Gastrocnemius medialis (tissue), 4 donors: ENCODE measurements at regions of chr11 and their contacts with region 1.

Region 1: GRCh38 chr11:100575870-100576705 is 111.0 kb upstream of the ARHGAP42 start:
- DNase-seq: peak in 1 of 2 donors; percentile 9
- ATAC-seq: peak; percentile 64 to 76
- H3K4me3 ChIP-seq: no peak overlapping the region
- H3K27ac ChIP-seq: no peak overlapping the region
- H3K4me1 ChIP-seq: peaks cover 0 to 14% of the 10 kb centered on the region in 2 donors
- H3K27me3 ChIP-seq: no peaks in the 10 kb centered on the region
- CTCF ChIP-seq: peak; percentile 64 to 82 (median 76)
- POLR2A ChIP-seq: no peak

Region 2: GRCh38 chr11:100681064-100681502 is 105.0 kb after region 1 on chr11:
- in situ Hi-C with region 1: no loop called
- intact Hi-C with region 1: loop called (anchors 2 kb)
- DNase-seq: peak; percentile 29 to 57
- ATAC-seq: peak; percentile 15 to 56
- H3K4me3 ChIP-seq: no peak overlapping the region
- H3K27ac ChIP-seq: peak overlapping the region in 3 of 4 donors; percentile 41 to 45 (median 43)
- H3K4me1 ChIP-seq: peaks cover 4 to 21% of the 10 kb centered on the region in 2 donors
- H3K27me3 ChIP-seq: no peaks in the 10 kb centered on the region
- CTCF ChIP-seq: no peak
- POLR2A ChIP-seq: no peak

Region 3: GRCh38 chr11:100687630-100688395 is 111.7 kb after region 1 on chr11:
- in situ Hi-C with region 1: loop called in 1 of 4 experiments (anchors 10 kb)
- intact Hi-C with region 1: loop called (anchors 2 kb)
- DNase-seq: peak; percentile 38 to 56
- ATAC-seq: peak; percentile 87 to 91
- H3K4me3 ChIP-seq: peak overlapping the region; percentile 52 to 69 (median 68)
- H3K27ac ChIP-seq: peak overlapping the region; percentile 77 to 90 (median 84)
- H3K4me1 ChIP-seq: peaks cover 12 to 27% of the 10 kb centered on the region in 2 donors
- H3K27me3 ChIP-seq: no peaks in the 10 kb centered on the region
- CTCF ChIP-seq: peak in 4 of 5 experiments; percentile 38 to 64 (median 60)
- POLR2A ChIP-seq: peak in 1 of 2 donors; percentile 31

Region 4: DNA sequence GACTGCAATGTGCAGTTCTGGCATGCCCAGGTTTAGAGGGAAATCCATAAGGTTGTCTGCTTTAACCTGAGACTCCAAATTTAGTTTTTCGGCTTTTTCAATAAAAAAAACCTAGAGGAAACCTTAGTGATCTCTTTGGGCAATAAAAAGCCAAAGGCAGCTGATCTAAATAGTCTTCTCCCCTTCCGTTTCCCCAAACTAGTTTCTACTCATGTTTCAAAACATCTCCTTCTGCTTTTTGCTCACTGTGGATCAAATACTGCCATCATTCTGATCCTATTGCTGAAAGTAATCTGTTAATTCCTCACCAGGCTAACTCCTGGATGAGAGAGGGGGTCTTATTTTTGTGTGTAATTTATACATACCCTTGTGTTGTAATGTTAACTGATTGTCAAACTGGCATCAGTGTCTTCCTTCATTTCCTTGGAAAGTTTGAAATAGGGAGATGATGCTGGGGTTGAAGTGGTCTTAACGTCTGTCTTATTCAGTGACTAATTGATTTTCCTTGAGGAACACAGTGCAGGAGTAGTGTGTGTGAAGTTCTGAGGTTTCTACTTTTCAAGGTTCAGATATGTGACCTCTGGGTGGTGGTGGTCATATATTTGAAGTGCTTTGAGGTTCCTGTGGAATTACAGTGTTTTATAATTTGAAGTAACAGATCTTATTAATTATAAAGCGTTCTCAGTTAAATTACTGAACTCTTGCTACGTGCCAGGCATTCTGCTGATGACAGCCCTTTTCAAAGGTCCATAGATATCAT is 166.0 kb after region 1 on chr11:
- in situ Hi-C with region 1: no loop called
- intact Hi-C with region 1: no loop called
- DNase-seq: no peak
- ATAC-seq: no peak
- H3K4me3 ChIP-seq: no peak overlapping the region
- H3K27ac ChIP-seq: no peak overlapping the region
- H3K4me1 ChIP-seq: peaks cover 24 to 36% of the 10 kb centered on the region in 2 donors
- H3K27me3 ChIP-seq: no peaks in the 10 kb centered on the region
- CTCF ChIP-seq: no peak
- POLR2A ChIP-seq: no peak

Region 5: DNA sequence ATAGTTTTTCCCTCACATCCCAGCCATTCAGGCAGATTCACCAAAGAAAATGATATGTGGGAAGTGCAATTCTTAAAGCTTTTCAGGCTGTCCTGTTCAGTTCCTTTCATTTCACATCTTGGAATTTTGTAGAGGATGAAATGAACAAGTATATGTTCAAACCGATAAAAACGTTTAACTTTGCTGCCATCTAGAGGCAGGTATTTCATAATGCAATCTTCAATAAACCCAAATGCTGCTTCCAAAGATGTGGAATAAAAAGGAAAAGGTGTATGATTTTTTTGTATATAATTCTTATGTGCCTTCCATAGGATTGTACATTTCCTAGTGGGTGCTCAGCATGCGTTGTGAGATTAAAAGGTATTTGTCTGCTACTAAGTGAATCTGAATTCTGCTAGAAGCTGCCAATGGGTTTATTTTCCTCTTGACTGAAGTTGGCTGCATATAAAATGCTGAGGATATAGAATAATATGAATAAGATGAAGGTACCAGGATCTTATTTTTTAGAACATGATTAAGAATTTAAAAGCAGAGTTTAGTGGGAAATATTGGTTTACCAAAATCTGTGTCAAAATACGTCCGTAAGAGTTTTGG is 354.2 kb after region 1 on chr11:
- in situ Hi-C with region 1: loop called (anchors 5 to 10 kb)
- intact Hi-C with region 1: loop called (anchors 2 kb)
- DNase-seq: no peak
- ATAC-seq: peak; percentile 47 to 61
- H3K4me3 ChIP-seq: no peak overlapping the region
- H3K27ac ChIP-seq: no peak overlapping the region
- H3K4me1 ChIP-seq: no peaks in the 10 kb centered on the region
- H3K27me3 ChIP-seq: no peaks in the 10 kb centered on the region
- CTCF ChIP-seq: peak; percentile 46 to 65 (median 51)
- POLR2A ChIP-seq: no peak